HCT116 (cell line): ENCODE measurements at regions of chr18 and their contacts with region 1.

Region 1: GRCh38 chr18:51278045-51278649 is 80.7 kb upstream of the MEX3C start:
- DNase-seq: peak; percentile 57
- ATAC-seq: peak; percentile 99
- H3K4me3 ChIP-seq: no peak overlapping the region
- H3K27ac ChIP-seq: no peak overlapping the region
- H3K4me1 ChIP-seq: no peaks in the 10 kb centered on the region
- H3K27me3 ChIP-seq: no peaks in the 10 kb centered on the region
- CTCF ChIP-seq: peak; percentile 44 to 94 (median 90); a peak in 5 of 6 replicates
- POLR2A ChIP-seq: no peak
- RAD21 ChIP-seq: peak; percentile 64

Region 2: DNA sequence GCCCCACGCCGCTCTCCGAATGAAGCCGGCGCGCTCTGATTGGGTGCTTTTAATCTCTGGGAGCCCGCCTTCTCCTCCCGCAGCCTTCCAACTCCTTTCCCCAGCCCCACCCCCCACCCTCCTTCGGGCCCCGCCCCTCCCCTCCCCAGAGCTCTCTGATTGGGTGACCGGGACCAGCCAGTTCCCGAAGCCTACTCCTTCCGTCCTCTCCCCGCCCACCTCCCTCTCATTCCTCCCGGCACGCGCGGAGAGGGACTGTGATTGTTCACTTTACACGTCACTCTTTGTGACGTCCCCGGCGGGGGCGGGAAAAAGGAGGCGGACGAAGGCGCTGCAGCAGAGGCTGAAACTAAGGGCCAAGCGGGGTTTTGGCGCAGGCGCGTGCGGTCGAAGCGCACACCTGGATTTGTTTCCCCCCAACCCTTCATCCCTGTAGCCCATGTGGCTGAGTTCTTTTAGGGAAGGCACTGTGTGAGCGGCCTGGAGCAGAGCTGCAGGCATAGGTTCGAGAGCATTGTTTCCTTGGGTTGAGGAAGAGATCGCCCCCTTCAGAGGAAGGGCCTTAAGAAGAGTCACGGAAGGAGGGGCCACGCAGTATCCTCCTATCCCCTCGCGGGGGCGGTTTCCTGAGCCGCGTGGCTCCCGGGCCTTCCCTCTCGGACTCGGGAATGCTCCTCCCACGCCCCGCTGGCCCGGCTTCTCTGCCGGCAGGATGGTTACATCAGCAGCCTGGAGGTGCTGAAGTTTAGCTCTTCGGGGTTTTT is 80.3 kb before region 1 on chr18 and contains the start of gene MEX3C:
- CTCF ChIA-PET with region 1: no interaction called
- POLR2A ChIA-PET with region 1: no interaction called
- RAD21 ChIA-PET with region 1: no interaction called
- intact Hi-C with region 1: no loop called
- DNase-seq: peak; percentile 97
- ATAC-seq: peak; percentile 89
- H3K4me3 ChIP-seq: peak within 1 kb of the TSS; percentile 83 to 98
- H3K27ac ChIP-seq: peak within 1 kb of the TSS; percentile 88
- H3K4me1 ChIP-seq: peaks cover 8 to 26% of the 10 kb centered on the region in 2 experiments; a peak in 3 of 4 replicates
- H3K27me3 ChIP-seq: no peaks in the 10 kb centered on the region
- CTCF ChIP-seq: 0 out of 6 replicates have a peak, but pooled peaks of 2 of the 3 experiments have one; percentile 3 to 12
- POLR2A ChIP-seq: peak; percentile 84
- RAD21 ChIP-seq: no peak
- total RNA-seq, gene MEX3C: 45.0 TPM

Region 3: GRCh38 chr18:51383116-51383515 is 105.0 kb after region 1 on chr18:
- CTCF ChIA-PET with region 1: interaction called, 4 read pairs
- POLR2A ChIA-PET with region 1: no interaction called
- RAD21 ChIA-PET with region 1: no interaction called
- intact Hi-C with region 1: loop called (anchors 5 kb)
- DNase-seq: no peak
- ATAC-seq: no peak
- H3K4me3 ChIP-seq: no peak overlapping the region
- H3K27ac ChIP-seq: no peak overlapping the region
- H3K4me1 ChIP-seq: no peaks in the 10 kb centered on the region
- H3K27me3 ChIP-seq: no peaks in the 10 kb centered on the region
- CTCF ChIP-seq: no peak
- POLR2A ChIP-seq: no peak
- RAD21 ChIP-seq: no peak